ENCODE measurements at regions of chr11 and their contacts with region 1.

Region 1: DNA sequence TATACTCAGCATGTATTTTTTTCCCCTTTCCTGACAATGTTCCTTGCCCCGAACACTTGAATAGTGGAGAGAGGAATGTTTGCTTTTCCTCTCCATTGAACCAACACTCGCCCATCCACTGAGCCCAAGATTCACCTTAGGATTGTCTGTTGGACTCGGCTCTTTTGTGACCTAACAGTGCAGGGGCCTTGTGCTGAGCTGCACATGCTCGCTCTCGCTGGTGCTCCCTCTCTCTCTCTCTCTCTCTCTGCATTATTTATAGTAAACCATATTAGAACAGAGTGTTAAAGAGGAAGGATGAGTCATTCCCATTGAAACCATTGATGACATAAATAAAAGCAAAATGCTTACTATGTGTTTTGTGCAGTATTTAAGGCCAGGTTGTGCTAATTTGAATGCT is 20.7 kb downstream of the ZBTB16 start:
- DNase-seq: peak; percentile 65 to 87 (median 79)
- H3K4me3 ChIP-seq: no peak overlapping the region
- H3K27ac ChIP-seq: peak overlapping the region; percentile 92 to 95
- H3K4me1 ChIP-seq: peaks cover 44 to 97% (median 93%) of the 10 kb centered on the region in 4 experiments
- H3K27me3 ChIP-seq: no peaks in the 10 kb centered on the region

Region 2: DNA sequence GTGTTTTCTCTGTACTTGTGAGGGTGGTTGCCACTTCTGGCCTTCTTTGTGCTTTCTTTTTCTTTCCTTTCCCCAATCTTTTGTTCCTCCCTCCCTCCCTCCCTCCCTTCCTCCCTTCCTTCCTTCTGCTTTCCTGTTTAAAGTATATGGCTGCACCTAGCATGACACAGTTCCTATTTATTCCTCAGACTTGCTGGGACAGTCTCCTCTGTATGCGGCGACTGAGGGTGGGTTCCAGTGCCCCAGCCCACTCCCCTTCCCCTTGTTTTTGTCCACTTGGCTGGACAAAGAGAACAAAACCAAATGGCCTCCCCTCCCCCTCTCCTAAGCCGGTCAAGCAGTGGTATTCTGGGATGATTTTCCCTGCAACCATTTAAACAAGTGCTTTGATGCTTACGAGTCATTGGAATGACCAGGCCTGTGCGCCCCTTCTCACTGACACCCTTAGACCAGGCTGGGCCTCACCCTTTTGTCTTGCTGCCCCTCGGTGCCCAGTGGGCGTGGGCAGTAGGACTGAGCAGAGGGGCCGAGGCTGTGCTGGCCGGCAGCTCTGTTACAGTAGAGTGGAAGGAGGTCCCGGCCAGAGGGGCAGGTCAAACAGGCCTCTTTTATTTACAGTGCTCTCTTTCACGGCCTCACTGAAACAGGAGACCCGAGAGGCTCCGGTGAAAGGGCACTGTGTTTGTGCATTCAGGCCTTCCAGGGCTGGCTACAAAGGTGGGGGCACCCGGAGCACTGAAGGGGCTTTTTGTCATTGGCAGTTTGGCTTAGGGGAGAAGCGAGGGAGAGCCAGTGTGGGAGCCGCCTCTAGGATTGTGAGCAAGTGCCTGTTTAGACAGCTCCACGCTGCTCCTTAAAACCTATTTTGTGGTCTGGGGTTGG is 11.5 kb after region 1 on chr11:
- CTCF ChIA-PET with region 1: interaction called, 10 read pairs
- POLR2A ChIA-PET with region 1: no interaction called
- DNase-seq: no peak
- H3K4me3 ChIP-seq: peak overlapping the region in 1 of 7 experiments; percentile 6
- H3K27ac ChIP-seq: peak overlapping the region; percentile 27 to 55
- H3K4me1 ChIP-seq: peaks cover 4 to 71% (median 54%) of the 10 kb centered on the region in 4 experiments
- H3K27me3 ChIP-seq: no peaks in the 10 kb centered on the region